Heart left ventricle (tissue), 16 donors: ENCODE measurements at regions of chr18 and their contacts with region 1.

Region 1: DNA sequence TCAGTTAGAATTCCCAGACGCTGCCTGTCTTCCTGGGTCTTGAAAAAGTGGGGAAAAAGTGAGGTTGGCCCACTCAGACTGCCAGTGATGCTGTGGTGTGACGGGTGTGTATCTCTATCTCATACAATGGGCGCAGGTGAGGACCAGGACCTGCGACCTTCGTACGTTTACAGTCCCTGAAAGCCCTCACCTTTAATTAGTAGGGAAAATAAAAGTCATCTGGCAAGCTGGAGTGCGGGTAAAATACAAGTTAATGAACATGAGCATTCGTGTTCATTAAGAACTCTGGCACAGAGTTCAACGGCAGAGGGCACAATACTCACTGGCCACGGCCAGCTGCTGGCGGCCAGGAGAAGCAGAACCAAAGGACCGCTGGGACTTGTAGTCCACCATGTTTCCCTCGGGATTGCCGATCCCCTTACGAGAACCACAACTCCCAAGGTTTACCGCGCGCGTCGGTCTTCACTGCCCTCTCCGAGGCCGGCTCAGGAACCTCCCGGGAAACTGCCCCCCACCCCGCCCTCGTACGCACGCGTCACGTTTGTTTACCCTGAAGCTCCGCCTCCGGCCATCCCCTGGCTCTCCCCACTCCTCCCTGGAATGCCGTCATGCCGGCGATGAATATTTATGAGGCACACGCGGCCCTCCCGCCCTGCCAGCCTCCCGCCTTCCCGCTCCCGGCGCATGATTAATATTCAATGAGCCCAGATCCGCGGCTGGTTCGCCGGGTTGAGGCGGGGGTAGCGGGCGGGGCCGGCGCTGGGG is 488 bp upstream of the PHLPP1 start:
- DNase-seq: peak; percentile 100
- ATAC-seq: peak; percentile 96 to 99 (median 99)
- H3K4me3 ChIP-seq: peak overlapping the region; percentile 56 to 88 (median 76)
- H3K27ac ChIP-seq: peak overlapping the region; percentile 66 to 98 (median 91)
- H3K4me1 ChIP-seq: peaks cover 0 to 35% (median 17%) of the 10 kb centered on the region in 12 donors
- H3K27me3 ChIP-seq: no peaks in the 10 kb centered on the region
- CTCF ChIP-seq: peak; percentile 65 to 95 (median 84)
- POLR2A ChIP-seq: no peak

Region 2: DNA sequence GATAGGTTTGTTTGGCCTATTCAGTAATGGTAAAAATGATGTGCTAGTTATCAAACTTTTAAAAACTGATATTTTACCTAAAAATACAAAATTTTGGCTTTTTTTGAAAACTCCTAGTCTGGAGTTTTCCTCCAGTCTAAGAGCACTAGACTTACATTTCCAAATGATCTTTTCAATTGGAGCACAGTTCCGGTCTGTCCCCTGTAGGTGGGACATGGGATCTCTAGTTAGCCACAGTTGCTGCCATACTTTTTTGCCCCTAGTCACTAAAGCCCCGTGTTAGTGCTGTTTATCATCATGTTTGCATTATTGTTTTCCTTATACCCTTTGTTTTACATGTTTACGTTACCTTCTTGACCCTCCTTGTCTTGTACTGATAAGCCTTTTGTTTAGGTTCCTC is 475.4 kb before region 1 on chr18:
- intact Hi-C with region 1: no loop called
- DNase-seq: no peak
- ATAC-seq: no peak
- H3K4me3 ChIP-seq: no peak overlapping the region
- H3K27ac ChIP-seq: no peak overlapping the region
- H3K4me1 ChIP-seq: peaks cover 0 to 8% (median 0%) of the 10 kb centered on the region in 12 donors
- H3K27me3 ChIP-seq: no peaks in the 10 kb centered on the region
- CTCF ChIP-seq: no peak
- POLR2A ChIP-seq: no peak

Region 3: GRCh38 chr18:62324917-62325805 is 389.7 kb before region 1 on chr18 and contains the start of gene TNFRSF11A:
- intact Hi-C with region 1: loop called in 1 of 10 experiments (anchors 10 kb)
- DNase-seq: peak in 3 of 5 donors; percentile 27 to 61 (median 31)
- ATAC-seq: peak in 3 of 4 donors; percentile 31 to 73 (median 63)
- H3K4me3 ChIP-seq: peak within 1 kb of the TSS; percentile 28 to 61 (median 52)
- H3K27ac ChIP-seq: no peak within 1 kb of the TSS
- H3K4me1 ChIP-seq: peaks cover 4 to 61% (median 30%) of the 10 kb centered on the region in 12 donors
- H3K27me3 ChIP-seq: peaks cover 18 to 68% (median 45%) of the 10 kb centered on the region in 9 donors
- CTCF ChIP-seq: peak in 7 of 12 donors; percentile 12 to 36 (median 29)
- POLR2A ChIP-seq: no peak
- total RNA-seq, gene TNFRSF11A: 0.16 to 5.0 (median 1.5) TPM

Region 4: GRCh38 chr18:62596145-62597005 is 118.5 kb before region 1 on chr18:
- intact Hi-C with region 1: loop called in 1 of 10 experiments (anchors 5 kb)
- DNase-seq: peak in 2 of 5 donors; percentile 26 to 34
- ATAC-seq: peak; percentile 37 to 78 (median 52)
- H3K4me3 ChIP-seq: peak overlapping the region; percentile 28 to 63 (median 53)
- H3K27ac ChIP-seq: peak overlapping the region in 7 of 12 donors; percentile 0 to 22 (median 13)
- H3K4me1 ChIP-seq: peaks cover 0 to 21% (median 12%) of the 10 kb centered on the region in 12 donors
- H3K27me3 ChIP-seq: peaks cover 0 to 38% (median 21%) of the 10 kb centered on the region in 9 donors
- CTCF ChIP-seq: no peak
- POLR2A ChIP-seq: no peak

Region 5: DNA sequence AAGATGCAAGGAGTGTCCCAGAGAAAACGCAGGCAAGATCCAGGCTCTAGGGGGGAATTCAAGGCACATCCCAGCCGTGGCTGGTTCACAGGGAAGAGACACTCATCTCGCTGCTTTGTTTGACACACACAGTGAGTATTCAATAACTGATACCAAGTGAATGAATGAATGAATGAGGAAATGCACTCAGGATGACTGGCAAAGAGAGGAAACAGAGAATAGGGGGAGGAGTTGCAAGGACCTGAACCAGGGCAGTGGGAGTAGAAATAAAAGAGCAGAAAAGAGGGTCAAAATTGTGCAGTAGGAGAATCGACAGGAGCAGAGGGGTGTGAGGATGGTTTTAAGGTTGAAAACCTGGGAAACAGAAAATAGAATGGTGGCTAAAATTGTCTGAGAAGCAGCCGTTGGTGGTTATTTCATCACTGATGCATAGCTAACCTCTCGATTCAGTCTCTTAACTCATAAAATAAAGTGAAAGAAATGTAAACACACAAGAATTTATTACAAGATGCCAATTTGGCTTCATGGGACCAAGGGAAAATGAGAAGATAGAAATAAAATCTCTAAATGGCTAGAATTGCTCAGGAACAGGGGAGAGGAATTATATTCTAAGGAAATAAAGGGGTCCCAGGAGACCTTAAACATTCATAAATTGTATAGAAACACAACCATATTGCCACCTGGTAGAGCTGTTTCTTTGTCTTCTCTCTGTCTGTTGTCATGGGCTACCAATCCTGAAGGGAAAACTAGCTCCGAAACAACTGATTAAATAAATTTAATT is 63.4 kb before region 1 on chr18:
- intact Hi-C with region 1: no loop called
- DNase-seq: no peak
- ATAC-seq: no peak
- H3K4me3 ChIP-seq: peak overlapping the region in 3 of 12 donors; percentile 7 to 31 (median 15)
- H3K27ac ChIP-seq: no peak overlapping the region
- H3K4me1 ChIP-seq: peaks cover 0 to 11% (median 0%) of the 10 kb centered on the region in 12 donors
- H3K27me3 ChIP-seq: no peaks in the 10 kb centered on the region
- CTCF ChIP-seq: no peak
- POLR2A ChIP-seq: no peak

Region 6: DNA sequence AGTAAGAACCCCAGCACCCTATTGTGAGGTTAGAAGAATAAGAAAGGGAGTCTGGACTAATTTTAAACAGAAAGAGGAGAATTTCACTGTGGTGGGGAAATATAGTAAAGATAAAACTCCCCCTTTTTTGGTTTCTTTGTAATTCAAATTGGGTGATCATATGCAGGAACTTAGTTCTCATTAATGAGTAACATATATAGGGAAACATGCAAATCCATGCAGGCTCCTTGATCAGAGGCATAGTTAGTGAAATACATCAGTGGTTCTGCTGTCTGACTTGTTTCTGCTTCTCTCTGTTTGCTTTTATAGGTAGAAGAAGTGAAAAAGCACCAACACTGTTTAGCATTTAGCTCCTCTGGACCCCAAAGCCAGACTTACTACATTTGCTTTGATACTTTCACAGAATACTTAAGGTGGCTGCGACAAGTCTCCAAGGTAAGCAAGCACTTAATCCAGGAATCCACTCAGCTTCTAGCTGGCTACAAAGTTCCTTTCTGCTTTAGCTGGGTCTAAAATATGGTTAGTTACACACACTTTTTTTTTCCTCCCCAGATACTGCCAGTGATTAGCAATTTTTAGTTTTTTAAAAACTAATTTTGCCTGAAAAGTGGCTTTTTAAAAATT is 123.7 kb after region 1 on chr18:
- intact Hi-C with region 1: no loop called
- DNase-seq: no peak
- ATAC-seq: no peak
- H3K4me3 ChIP-seq: no peak overlapping the region
- H3K27ac ChIP-seq: no peak overlapping the region
- H3K4me1 ChIP-seq: peaks cover 0 to 4% (median 0%) of the 10 kb centered on the region in 12 donors
- H3K27me3 ChIP-seq: no peaks in the 10 kb centered on the region
- CTCF ChIP-seq: no peak
- POLR2A ChIP-seq: no peak

Region 7: GRCh38 chr18:62881509-62882016 is 166.7 kb after region 1 on chr18:
- intact Hi-C with region 1: loop called in 2 of 10 experiments (anchors 5 kb)
- DNase-seq: no peak
- ATAC-seq: peak in 3 of 4 donors; percentile 54 to 90 (median 76)
- H3K4me3 ChIP-seq: no peak overlapping the region
- H3K27ac ChIP-seq: no peak overlapping the region
- H3K4me1 ChIP-seq: peaks cover 7 to 42% (median 23%) of the 10 kb centered on the region in 12 donors
- H3K27me3 ChIP-seq: no peaks in the 10 kb centered on the region
- CTCF ChIP-seq: no peak
- POLR2A ChIP-seq: no peak

Region 8: DNA sequence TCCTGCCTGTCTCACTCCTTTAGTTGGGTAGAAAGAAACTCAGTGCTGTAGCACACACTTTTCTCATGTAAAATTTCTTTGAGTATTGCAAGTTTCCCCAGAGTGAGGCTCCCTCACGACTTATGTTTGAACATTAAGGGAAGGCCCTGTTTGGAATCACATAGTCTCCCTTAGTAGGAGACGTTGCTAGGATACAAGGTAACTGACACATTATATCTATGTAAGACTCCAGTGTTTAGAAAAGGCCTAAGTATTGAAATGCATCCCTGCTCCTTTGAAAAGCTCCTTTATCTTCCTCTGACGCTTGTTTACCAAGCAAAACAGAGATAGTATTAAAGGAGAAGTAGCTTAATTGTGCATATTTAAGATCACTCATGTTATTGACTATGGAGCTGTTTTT is 248.7 kb after region 1 on chr18:
- intact Hi-C with region 1: loop called in 8 of 10 experiments (anchors 2 to 10 kb)
- DNase-seq: no peak
- ATAC-seq: no peak
- H3K4me3 ChIP-seq: no peak overlapping the region
- H3K27ac ChIP-seq: no peak overlapping the region
- H3K4me1 ChIP-seq: no peaks in the 10 kb centered on the region
- H3K27me3 ChIP-seq: no peaks in the 10 kb centered on the region
- CTCF ChIP-seq: no peak
- POLR2A ChIP-seq: no peak